Activated CD4-positive, alpha-beta T cell treated with anti-CD3 and anti-CD28 coated beads for 36 hours (primary cell): ENCODE measurements at regions of chr4 and their contacts with region 1.

Region 1: DNA sequence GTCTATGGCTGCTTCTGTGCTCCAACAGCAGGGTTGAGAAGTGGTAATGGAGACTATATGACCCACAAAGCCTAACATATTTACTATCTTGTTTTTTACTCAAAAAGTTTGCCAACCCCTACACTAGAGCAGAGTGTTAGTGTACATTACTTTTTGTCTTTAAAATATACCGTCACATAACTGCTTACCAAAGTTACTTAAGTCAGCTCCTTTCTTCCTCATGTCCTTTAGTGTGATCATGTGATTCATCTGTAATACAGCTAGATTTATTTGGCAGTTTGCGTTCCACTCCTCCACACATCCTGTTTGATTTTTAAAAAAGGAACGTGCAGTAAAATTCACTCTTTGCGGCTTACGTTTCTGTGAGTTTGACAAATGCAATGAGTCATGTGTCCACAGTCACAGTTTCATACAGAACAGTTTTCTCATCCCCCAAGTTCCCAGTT is 162.4 kb upstream of the GPRIN3 start:
- DNase-seq: peak; percentile 39
- ATAC-seq: peak; percentile 95
- H3K4me3 Mint-ChIP-seq: peak overlapping the region; percentile 29
- H3K27ac Mint-ChIP-seq: peak overlapping the region; percentile 83
- H3K4me1 Mint-ChIP-seq: peaks cover 25% of the 10 kb centered on the region
- H3K27me3 Mint-ChIP-seq: no peaks in the 10 kb centered on the region

Region 2: DNA sequence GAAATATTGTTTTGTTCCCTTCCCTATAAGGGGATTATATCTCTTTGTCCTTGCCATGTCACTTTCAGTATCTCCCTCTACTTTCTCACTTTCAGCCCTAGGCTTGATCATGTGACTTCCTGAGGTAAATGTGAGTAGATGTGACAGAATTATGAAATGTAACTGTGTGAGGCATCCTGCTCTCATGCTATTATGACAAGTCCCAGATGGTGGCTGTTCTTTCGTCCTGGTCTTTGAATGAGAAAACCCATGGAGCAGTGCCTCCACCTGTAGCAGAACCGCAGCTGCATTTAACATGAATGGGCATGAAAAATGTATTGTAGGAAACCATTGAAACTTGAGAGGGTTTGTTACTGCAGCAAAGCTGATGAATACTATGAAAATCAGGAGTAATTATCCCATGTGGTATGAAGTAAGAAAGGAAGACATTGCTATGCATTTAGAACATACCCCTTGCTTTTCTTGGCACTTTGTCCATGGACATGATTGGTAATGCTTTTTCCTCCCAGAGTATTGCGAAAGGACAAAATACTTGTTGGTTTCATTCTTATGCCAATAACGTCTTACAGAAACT is 39.8 kb after region 1 on chr4:
- CTCF ChIA-PET with region 1: no interaction called
- POLR2A ChIA-PET with region 1: no interaction called
- intact Hi-C with region 1: loop called in 1 of 2 experiments (anchors 1 kb)
- DNase-seq: peak; percentile 26
- ATAC-seq: peak; percentile 99
- H3K4me3 Mint-ChIP-seq: no peak overlapping the region
- H3K27ac Mint-ChIP-seq: no peak overlapping the region
- H3K4me1 Mint-ChIP-seq: peaks cover 16% of the 10 kb centered on the region
- H3K27me3 Mint-ChIP-seq: peaks cover 14% of the 10 kb centered on the region

Region 3: DNA sequence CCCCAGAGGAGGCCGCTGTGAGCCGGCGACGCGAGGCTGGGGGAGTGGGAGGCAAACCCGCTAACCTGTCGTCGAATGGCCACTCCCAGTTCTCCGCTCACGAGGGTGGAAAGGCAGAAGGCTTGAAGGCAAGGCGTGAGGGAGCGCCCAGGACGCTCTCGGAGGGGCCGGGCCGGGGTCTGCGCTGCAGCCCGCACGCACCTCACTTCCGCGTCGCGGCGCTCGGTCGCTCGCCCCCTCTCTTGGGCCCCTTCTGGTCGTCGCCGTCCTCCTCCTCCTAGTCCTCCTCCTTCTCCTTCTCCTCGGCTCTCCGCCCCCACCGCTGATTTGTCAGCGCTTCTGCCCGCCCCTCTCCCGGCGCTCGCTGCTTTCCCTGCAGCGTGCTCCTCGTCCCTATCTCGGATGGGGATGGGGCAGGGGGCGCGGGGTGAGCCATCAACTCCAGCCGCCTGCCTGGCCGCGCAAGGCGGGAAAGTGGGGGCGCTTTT is 367.0 kb after region 1 on chr4 and contains the start of gene SNCA:
- CTCF ChIA-PET with region 1: no interaction called
- POLR2A ChIA-PET with region 1: no interaction called
- intact Hi-C with region 1: loop called in 1 of 2 experiments (anchors 5 kb)
- DNase-seq: peak; percentile 76
- ATAC-seq: peak; percentile 70
- H3K4me3 Mint-ChIP-seq: peak within 1 kb of the TSS; percentile 70
- H3K27ac Mint-ChIP-seq: no peak within 1 kb of the TSS
- H3K4me1 Mint-ChIP-seq: peaks cover 16% of the 10 kb centered on the region
- H3K27me3 Mint-ChIP-seq: peaks cover 48% of the 10 kb centered on the region
- total RNA-seq, gene SNCA: 0.85 to 1.3 TPM